Activated B cell treated with CpG ODN at 0.5 μM for 24 hours (primary cell): ENCODE measurements at regions of chr10 and their contacts with region 1.

Region 1: GRCh38 chr10:26725837-26726727 is 28.6 kb downstream of the PDSS1 start:
- DNase-seq: no peak
- ATAC-seq: peak; percentile 80
- H3K4me3 Mint-ChIP-seq: no peak overlapping the region
- H3K27ac Mint-ChIP-seq: peak overlapping the region; percentile 4
- H3K4me1 Mint-ChIP-seq: peaks cover 17% of the 10 kb centered on the region
- H3K27me3 Mint-ChIP-seq: no peaks in the 10 kb centered on the region
- CTCF ChIP-seq: peak; percentile 45

Region 2: DNA sequence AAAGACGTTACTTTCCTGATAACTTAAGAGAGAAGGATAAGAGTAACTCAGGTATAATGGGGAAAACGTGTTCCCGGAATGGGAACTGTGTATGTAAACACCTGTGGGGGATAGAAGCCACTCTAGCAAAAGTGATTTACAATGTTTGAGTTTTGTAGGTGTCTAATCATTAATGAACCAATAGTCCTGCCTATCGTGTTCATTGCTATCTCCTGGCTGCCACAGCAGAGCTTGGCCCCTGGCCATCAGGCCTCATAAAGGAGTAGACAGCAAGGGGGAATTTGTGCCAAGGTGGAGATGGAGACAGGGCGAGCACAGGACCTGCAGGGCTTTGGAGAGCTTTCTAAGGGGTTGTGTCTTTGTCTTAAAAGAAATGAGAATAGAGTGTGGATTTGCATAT is 407.4 kb before region 1 on chr10:
- CTCF ChIA-PET with region 1: no interaction called
- POLR2A ChIA-PET with region 1: no interaction called
- intact Hi-C with region 1: no loop called
- DNase-seq: no peak
- ATAC-seq: no peak
- H3K4me3 Mint-ChIP-seq: no peak overlapping the region
- H3K27ac Mint-ChIP-seq: no peak overlapping the region
- H3K4me1 Mint-ChIP-seq: no peaks in the 10 kb centered on the region
- H3K27me3 Mint-ChIP-seq: peaks cover 14% of the 10 kb centered on the region
- CTCF ChIP-seq: no peak

Region 3: GRCh38 chr10:26665080-26666048 is 60.7 kb before region 1 on chr10:
- CTCF ChIA-PET with region 1: no interaction called
- POLR2A ChIA-PET with region 1: no interaction called
- intact Hi-C with region 1: no loop called
- DNase-seq: no peak
- ATAC-seq: no peak
- H3K4me3 Mint-ChIP-seq: no peak overlapping the region
- H3K27ac Mint-ChIP-seq: no peak overlapping the region
- H3K4me1 Mint-ChIP-seq: no peaks in the 10 kb centered on the region
- H3K27me3 Mint-ChIP-seq: peaks cover 5% of the 10 kb centered on the region
- CTCF ChIP-seq: no peak

Region 4: DNA sequence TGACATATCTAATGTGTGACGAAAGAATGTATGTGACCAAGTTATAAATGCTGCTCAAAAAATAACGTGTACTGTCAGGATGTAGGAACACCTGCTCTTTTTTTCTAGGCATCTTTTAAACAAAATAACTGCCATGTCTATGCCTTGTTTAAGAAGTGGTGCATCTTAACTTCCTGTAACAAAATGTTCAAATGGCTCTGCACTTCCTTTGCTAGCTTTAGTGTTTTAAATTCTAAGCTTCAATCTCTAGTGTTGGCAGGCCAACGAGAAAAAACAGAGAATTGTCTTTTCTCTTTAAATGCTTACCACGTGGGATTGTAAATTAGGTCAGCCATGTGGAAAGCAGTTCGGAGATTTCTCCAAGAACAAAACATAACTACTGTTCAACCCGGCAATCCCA is 43.2 kb before region 1 on chr10:
- CTCF ChIA-PET with region 1: interaction called, 11 read pairs
- POLR2A ChIA-PET with region 1: no interaction called
- intact Hi-C with region 1: no loop called
- DNase-seq: no peak
- ATAC-seq: no peak
- H3K4me3 Mint-ChIP-seq: no peak overlapping the region
- H3K27ac Mint-ChIP-seq: no peak overlapping the region
- H3K4me1 Mint-ChIP-seq: peaks cover 2% of the 10 kb centered on the region
- H3K27me3 Mint-ChIP-seq: peaks cover 8% of the 10 kb centered on the region
- CTCF ChIP-seq: no peak

Region 5: DNA sequence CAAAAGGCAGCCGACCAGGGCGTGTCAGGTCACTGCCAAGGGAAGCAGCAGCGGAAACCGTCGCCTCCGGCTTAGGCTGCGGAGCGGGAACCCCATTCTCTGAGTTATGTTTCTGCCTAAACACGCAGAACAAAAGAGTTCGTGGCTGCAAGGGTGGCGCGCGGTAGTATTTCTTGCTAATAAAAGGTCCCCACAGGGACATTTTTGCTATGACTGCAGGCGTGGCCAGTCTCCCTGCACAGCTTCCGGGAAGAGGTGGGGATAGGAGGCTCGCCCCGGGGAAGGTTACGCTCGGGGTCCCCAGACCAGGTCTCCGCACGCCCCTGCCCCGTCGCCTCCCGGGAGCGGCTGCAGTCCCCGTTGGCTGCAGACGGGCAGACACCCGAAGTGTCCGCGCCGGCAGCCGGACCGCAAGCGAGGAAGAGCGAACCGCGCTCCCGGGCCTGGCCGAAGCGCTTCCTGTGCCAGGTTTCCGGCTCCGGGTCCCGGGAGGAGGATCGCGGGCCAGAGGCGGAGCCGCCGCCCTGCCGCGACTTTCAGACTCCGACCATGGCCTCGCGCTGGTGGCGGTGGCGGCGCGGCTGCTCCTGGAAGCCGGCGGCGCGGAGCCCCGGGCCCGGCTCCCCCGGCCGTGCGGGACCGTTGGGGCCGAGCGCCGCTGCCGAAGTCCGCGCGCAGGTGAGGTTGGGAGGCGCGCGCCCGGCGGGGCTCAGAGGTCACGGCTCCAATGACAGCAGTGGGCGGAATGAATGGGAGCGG is 28.7 kb before region 1 on chr10 and contains the start of gene PDSS1:
- CTCF ChIA-PET with region 1: interaction called, 10 read pairs
- POLR2A ChIA-PET with region 1: no interaction called
- intact Hi-C with region 1: no loop called
- DNase-seq: peak; percentile 65
- ATAC-seq: peak; percentile 87
- H3K4me3 Mint-ChIP-seq: peak within 1 kb of the TSS; percentile 93
- H3K27ac Mint-ChIP-seq: peak within 1 kb of the TSS; percentile 84
- H3K4me1 Mint-ChIP-seq: peaks cover 27% of the 10 kb centered on the region
- H3K27me3 Mint-ChIP-seq: no peaks in the 10 kb centered on the region
- CTCF ChIP-seq: no peak
- total RNA-seq, gene PDSS1: 8.7 and 9.0 TPM in 2 replicates

Region 6: DNA sequence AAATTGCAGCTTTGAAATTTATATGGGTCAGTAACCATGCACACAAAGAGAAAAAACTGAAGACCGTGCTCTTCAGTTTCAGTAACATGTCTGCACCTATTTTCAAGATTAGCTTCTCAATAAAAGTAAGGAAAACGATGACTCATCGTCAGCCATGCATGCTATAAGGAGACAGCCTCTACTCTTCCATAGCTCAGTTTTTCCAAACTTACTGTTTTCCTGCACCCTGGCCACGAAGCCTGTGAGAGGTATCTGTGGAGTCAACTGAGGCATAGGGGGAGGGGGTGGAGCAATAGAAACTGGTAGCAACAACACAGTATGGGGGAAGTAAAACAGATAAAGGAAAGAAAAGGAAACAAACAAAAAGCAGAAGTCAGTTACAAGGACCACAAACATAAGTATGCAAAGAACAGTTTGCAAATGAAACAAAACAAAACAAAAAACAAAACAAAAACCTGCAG is 29.4 kb after region 1 on chr10:
- CTCF ChIA-PET with region 1: interaction called, 16 read pairs
- POLR2A ChIA-PET with region 1: interaction called, 3 read pairs
- intact Hi-C with region 1: no loop called
- DNase-seq: no peak
- ATAC-seq: peak; percentile 75
- H3K4me3 Mint-ChIP-seq: peak overlapping the region; percentile 59
- H3K27ac Mint-ChIP-seq: peak overlapping the region; percentile 68
- H3K4me1 Mint-ChIP-seq: peaks cover 25% of the 10 kb centered on the region
- H3K27me3 Mint-ChIP-seq: no peaks in the 10 kb centered on the region
- CTCF ChIP-seq: no peak

Region 7: DNA sequence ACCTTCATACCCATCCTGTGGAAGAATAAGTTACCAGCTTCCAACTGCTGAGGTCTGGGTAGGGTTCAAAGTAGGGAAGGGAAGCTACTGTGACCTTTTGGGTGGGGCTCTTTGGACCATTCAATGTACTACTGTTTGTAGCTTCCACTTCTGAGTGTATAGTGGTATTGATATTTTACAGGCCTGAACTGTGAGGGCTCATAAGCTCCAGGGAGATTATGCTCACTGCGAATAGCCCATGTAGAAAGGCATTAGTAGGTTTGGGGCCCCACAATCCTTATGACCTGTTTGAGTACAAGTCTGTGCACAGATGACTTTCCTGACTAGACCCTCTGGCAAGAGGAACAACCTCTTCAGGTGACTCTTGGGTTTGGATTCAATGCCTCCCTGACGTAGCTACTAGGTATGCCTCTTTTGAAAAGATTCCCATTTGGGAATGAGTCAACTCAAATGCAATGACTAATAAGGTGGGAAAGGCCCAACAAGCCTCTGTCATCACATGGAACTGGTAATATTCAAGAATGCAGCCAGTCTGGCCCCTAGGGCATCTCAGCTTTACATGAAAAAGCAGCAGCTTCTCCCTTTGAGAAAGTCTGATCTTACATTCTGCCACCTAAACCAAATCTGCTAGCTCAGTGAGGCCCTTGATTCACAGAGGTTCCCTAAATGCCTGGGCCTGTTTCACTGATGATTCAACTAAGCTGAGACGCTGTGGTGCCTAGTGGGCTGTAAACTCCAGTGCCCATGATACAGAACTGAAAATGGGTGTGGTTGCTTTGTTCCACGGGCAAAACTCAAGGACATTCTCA is 54.9 kb after region 1 on chr10:
- CTCF ChIA-PET with region 1: interaction called, 15 read pairs
- POLR2A ChIA-PET with region 1: interaction called, 3 read pairs
- intact Hi-C with region 1: no loop called
- DNase-seq: no peak
- ATAC-seq: peak; percentile 94
- H3K4me3 Mint-ChIP-seq: peak overlapping the region; percentile 72
- H3K27ac Mint-ChIP-seq: peak overlapping the region; percentile 88
- H3K4me1 Mint-ChIP-seq: peaks cover 86% of the 10 kb centered on the region
- H3K27me3 Mint-ChIP-seq: no peaks in the 10 kb centered on the region
- CTCF ChIP-seq: no peak

Region 8: DNA sequence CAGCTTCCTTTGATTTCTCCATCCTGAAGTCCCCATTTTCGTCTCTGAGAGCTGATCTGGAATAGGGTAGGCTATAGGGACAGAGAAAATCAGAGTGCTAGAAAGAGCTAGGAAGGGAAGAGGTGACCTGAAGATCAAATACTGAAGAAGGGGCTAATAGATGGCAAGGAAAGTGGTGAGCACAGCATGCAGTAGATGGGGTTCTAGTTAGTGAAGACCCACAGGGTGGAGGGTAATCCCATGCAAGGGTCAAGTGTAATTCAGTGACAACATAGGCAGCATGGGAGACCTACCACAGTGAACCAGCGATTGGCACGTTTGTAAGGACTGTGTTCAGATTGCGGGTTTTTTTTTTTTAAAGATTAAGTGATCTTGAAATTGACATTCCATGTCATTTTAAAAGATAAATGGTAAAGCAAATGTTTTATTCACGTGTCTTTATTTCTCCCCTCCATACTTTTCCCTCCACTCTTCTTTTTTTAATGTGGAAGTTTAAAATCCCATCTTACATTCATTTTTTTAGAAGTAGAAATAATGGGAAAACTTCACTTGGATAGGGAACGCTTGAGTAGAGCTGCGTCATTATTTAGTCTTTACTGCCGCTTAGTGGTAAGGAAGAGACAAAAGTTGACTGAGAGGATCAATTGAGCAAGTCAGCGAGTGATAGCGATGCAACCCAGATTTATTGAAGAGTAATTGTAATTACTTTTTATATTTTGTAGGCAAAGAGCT is 155.7 kb after region 1 on chr10:
- CTCF ChIA-PET with region 1: interaction called, 254 read pairs
- POLR2A ChIA-PET with region 1: interaction called, 15 read pairs
- intact Hi-C with region 1: loop called (anchors 1 kb)
- DNase-seq: no peak
- ATAC-seq: peak; percentile 75
- H3K4me3 Mint-ChIP-seq: no peak overlapping the region
- H3K27ac Mint-ChIP-seq: no peak overlapping the region
- H3K4me1 Mint-ChIP-seq: peaks cover 2% of the 10 kb centered on the region
- H3K27me3 Mint-ChIP-seq: peaks cover 11% of the 10 kb centered on the region
- CTCF ChIP-seq: no peak

Region 9: DNA sequence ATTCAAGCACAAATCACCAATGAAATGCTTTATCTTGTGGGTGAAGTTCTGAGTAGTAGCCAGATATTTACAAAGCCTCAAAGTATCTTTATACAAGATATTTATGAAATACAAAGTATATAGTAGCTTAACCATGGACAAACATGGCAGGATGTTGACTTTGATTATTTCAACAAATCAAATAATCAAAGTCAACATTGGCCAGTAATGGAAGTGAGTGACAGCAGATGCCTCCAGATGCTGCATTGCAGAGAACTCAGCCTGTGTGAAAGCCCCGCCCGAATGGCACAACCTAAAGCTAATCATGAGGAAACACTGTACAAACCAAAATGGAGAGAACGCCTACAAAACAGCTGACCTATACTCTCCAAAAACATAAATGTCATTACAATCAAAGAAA is 277.4 kb after region 1 on chr10:
- CTCF ChIA-PET with region 1: no interaction called
- POLR2A ChIA-PET with region 1: no interaction called
- intact Hi-C with region 1: no loop called
- DNase-seq: no peak
- ATAC-seq: no peak
- H3K4me3 Mint-ChIP-seq: no peak overlapping the region
- H3K27ac Mint-ChIP-seq: no peak overlapping the region
- H3K4me1 Mint-ChIP-seq: no peaks in the 10 kb centered on the region
- H3K27me3 Mint-ChIP-seq: no peaks in the 10 kb centered on the region
- CTCF ChIP-seq: no peak

Region 10: DNA sequence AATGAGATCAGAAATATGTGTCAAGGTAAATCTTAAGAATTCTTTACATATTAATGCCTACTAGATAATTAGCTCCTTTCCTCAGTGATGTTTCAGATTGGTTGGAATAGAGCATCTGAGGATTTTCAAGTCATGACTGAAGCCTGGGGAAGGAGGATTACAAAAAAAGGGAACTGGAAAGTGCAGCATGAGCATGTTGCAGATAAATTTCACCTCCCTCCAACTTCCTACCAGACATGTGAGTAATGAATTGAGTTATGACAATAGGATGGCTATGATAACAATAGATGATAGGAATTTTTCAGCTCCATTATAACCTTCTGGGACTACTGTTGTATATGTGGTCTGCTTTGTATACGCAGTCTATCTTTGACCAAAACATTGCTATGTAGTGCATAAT is 673.8 kb after region 1 on chr10:
- CTCF ChIA-PET with region 1: no interaction called
- POLR2A ChIA-PET with region 1: no interaction called
- intact Hi-C with region 1: no loop called
- DNase-seq: no peak
- ATAC-seq: no peak
- H3K4me3 Mint-ChIP-seq: no peak overlapping the region
- H3K27ac Mint-ChIP-seq: no peak overlapping the region
- H3K4me1 Mint-ChIP-seq: no peaks in the 10 kb centered on the region
- H3K27me3 Mint-ChIP-seq: peaks cover 13% of the 10 kb centered on the region
- CTCF ChIP-seq: no peak